Activated CD4-positive, alpha-beta T cell treated with anti-CD3 and anti-CD28 coated beads, Interleukin-2, amount 10 ng/mL, durations not matched to agents 24 days and 14 days (primary cell): ENCODE measurements at regions of chr15 and their contacts with region 1.

Region 1: DNA sequence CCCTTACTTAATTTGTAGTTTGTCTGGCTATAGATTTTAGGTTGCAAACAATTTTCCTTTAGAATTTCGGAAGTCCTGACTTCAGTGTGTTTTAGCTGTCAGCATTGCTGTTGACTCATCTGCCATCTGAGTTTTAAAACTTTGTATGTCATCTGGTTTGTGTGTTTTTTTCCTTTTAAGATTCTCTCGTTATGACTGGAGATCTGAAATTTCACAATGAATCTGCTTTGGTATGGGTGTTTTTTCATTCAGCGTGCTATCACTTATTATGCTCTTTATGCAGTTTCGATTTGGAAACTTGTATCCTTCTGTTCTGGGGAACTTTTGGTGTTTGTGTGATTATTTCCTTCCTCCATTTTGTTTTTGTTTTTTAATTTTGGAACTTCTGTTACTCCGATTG is 53.7 kb upstream of the ZNF280D start:
- DNase-seq: no peak
- H3K4me3 Mint-ChIP-seq: peak overlapping the region; percentile 42
- H3K27ac Mint-ChIP-seq: peak overlapping the region; percentile 74
- H3K4me1 Mint-ChIP-seq: peaks cover 15% of the 10 kb centered on the region
- H3K27me3 Mint-ChIP-seq: no peaks in the 10 kb centered on the region

Region 2: DNA sequence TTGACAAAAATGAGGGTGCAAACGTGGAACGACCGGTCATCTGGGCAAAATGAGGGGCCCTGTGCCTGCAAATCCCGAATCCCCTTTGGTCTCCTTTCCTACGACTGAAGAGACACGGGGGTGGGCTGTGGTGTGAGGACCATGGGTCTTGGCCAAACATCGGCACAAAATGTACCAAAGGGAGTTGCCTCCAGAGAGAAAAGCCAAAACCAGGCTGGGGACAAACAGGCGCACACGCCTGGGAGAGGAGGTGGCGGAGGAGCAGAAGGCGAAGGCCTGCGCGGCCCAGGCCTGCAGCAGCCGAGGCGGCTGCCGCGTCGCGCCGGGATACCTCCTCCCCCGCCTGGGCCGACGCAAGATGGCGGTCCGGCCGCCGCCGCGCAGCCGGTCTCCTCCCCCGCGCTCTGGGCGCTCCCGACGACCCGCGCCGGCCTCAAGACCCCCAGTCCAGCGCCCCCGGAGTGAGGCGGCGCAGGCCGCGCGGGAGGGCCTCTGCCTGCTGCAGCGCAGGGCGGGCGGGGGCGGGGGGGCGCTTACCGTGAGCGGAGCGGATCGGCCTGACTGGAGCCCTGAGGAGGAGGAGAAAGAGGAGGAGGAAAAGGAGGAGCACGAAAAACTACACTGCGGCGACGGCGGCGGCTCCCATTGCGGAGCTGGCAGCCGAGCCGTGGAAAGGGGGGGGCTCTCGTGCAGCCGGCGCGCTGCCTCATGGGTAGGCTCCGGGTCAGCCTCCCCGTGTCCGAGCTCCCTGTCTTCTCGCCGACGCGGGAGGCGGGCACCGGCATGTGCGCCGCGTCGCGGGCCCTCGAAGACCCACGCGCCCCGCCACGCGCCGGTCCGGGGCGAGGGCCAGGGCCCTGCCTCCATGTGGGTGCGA is 53.8 kb before region 1 on chr15 and contains the start of gene ZNF280D:
- intact Hi-C with region 1: loop called (anchors 5 kb)
- DNase-seq: peak; percentile 94
- H3K4me3 Mint-ChIP-seq: peak within 1 kb of the TSS; percentile 91
- H3K27ac Mint-ChIP-seq: peak within 1 kb of the TSS; percentile 96
- H3K4me1 Mint-ChIP-seq: peaks cover 29% of the 10 kb centered on the region
- H3K27me3 Mint-ChIP-seq: peaks cover 2% of the 10 kb centered on the region
- total RNA-seq, gene ZNF280D: 25.9 and 26.2 TPM in 2 replicates

Region 3: GRCh38 chr15:56765251-56765650 is 21.7 kb before region 1 on chr15:
- intact Hi-C with region 1: loop called (anchors 1 kb)
- DNase-seq: peak; percentile 74
- H3K4me3 Mint-ChIP-seq: peak overlapping the region; percentile 41
- H3K27ac Mint-ChIP-seq: peak overlapping the region; percentile 93
- H3K4me1 Mint-ChIP-seq: peaks cover 32% of the 10 kb centered on the region
- H3K27me3 Mint-ChIP-seq: no peaks in the 10 kb centered on the region

Region 4: GRCh38 chr15:56805466-56806146 is 18.6 kb after region 1 on chr15:
- intact Hi-C with region 1: loop called (anchors 2 kb)
- DNase-seq: peak; percentile 47
- H3K4me3 Mint-ChIP-seq: no peak overlapping the region
- H3K27ac Mint-ChIP-seq: no peak overlapping the region
- H3K4me1 Mint-ChIP-seq: peaks cover 6% of the 10 kb centered on the region
- H3K27me3 Mint-ChIP-seq: peaks cover 2% of the 10 kb centered on the region